CD8-positive, alpha-beta T cell (primary cell): ENCODE measurements at regions of chr9 and their contacts with region 1.

Region 1: DNA sequence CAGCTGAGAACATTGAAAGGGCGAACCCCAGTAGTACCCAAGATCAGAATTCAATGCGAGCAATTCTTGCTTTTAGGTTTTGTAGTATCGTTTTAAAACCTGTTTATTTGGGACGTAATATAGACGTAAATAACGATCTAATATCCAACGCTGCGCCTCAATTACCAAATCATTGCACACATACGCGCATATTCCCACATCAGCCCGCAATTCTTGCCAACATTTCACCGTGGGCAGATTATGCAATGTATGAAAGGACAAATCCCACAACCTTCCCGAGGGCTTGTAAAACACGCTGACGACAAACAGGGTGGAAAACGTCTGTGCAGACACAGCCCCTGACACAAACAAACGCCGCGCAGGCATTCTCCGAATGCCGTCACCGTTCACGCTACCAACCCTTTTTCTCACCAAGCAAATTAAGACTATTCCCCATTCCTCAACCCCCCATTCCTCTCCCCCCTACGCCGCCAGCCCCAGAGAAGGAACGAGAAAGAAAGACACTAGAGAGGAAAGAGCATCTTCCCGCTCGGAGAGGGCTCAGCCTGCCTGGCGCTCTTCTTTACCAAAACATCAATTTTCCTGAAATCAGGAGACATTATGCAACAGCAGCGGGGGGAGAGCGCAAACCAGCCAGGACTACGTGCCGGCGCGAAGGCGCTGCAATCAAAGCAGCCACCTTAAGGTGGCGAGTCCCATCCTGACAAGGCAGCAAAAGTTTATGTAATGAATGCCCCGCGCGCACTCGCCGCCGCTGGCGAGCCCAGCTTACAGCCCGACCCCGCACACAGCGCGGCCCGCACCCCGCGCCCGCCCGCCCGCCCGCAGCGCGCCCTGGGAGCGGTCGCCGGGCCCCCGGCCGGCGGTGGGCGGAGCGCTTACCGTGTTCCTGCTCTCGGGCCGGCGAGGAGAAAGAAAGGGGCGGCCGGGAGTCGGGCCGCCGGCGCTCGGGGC is 597 bp downstream of the NFIL3 start:
- DNase-seq: peak; percentile 21 to 84 (median 57)
- ATAC-seq: peak; percentile 51
- H3K4me3 ChIP-seq: peak overlapping the region; percentile 28 to 68
- H3K4me3 Mint-ChIP-seq: peak overlapping the region; percentile 94
- H3K27ac ChIP-seq: no peak overlapping the region
- H3K27ac Mint-ChIP-seq: peak overlapping the region; percentile 82
- H3K4me1 ChIP-seq: peaks cover 38% of the 10 kb centered on the region
- H3K4me1 Mint-ChIP-seq: peaks cover 44% of the 10 kb centered on the region
- H3K27me3 ChIP-seq: peaks cover 0 to 15% of the 10 kb centered on the region in 2 experiments
- H3K27me3 Mint-ChIP-seq: peaks cover 27% of the 10 kb centered on the region
- CTCF ChIP-seq: no peak

Region 2: DNA sequence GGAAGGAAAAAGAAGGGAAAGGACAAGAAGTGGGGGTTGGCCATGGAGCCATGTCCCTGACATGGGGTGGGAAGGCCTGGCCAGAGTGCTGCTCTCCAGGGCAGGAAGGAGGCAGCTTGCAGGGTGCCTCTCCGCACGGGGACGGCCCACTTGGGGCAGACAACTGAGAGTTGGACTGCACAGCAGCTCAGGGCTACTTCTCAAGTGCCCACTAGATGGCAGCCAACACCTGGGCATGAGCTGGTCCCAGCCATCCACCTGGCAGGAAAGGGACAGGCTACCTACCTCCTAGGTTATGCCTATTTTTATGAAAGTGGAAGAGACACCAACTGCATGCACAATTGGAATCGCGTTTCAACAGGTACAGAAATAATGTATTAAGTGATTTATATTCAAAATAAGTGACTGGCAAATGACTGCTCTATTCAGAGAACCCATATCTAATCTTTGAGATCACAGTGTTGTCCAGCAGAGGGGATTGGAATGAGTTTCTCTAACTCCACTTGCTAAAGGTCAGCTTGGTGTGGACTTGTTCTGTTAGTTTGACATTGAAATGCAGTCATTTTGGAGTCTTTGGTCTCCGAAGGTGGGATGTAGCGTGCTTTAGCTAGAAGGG is 508.1 kb before region 1 on chr9:
- CTCF ChIA-PET with region 1: interaction called, 85 read pairs
- POLR2A ChIA-PET with region 1: interaction called, 7 read pairs
- intact Hi-C with region 1: loop called in 1 of 2 experiments (anchors 1 kb)
- DNase-seq: peak; percentile 45 to 85 (median 74)
- ATAC-seq: peak; percentile 90
- H3K4me3 ChIP-seq: no peak overlapping the region
- H3K4me3 Mint-ChIP-seq: no peak overlapping the region
- H3K27ac ChIP-seq: no peak overlapping the region
- H3K27ac Mint-ChIP-seq: no peak overlapping the region
- H3K4me1 ChIP-seq: no peaks in the 10 kb centered on the region
- H3K4me1 Mint-ChIP-seq: no peaks in the 10 kb centered on the region
- H3K27me3 ChIP-seq: no peaks in the 10 kb centered on the region
- H3K27me3 Mint-ChIP-seq: no peaks in the 10 kb centered on the region
- CTCF ChIP-seq: peak; percentile 86

Region 3: GRCh38 chr9:91036826-91037510 is 386.1 kb before region 1 on chr9:
- CTCF ChIA-PET with region 1: interaction called, 31 read pairs
- POLR2A ChIA-PET with region 1: interaction called, 4 read pairs
- intact Hi-C with region 1: loop called (anchors 1 to 2 kb)
- DNase-seq: peak; percentile 24 to 79 (median 59)
- ATAC-seq: peak; percentile 85
- H3K4me3 ChIP-seq: no peak overlapping the region
- H3K4me3 Mint-ChIP-seq: peak overlapping the region; percentile 35
- H3K27ac ChIP-seq: no peak overlapping the region
- H3K27ac Mint-ChIP-seq: no peak overlapping the region
- H3K4me1 ChIP-seq: peaks cover 11% of the 10 kb centered on the region
- H3K4me1 Mint-ChIP-seq: peaks cover 11% of the 10 kb centered on the region
- H3K27me3 ChIP-seq: no peaks in the 10 kb centered on the region
- H3K27me3 Mint-ChIP-seq: peaks cover 24% of the 10 kb centered on the region
- CTCF ChIP-seq: peak; percentile 43

Region 4: GRCh38 chr9:91101611-91102168 is 321.3 kb before region 1 on chr9:
- CTCF ChIA-PET with region 1: interaction called, 5 read pairs
- POLR2A ChIA-PET with region 1: no interaction called
- intact Hi-C with region 1: loop called (anchors 5 to 10 kb)
- DNase-seq: peak; percentile 62 to 95 (median 78)
- ATAC-seq: peak; percentile 86
- H3K4me3 ChIP-seq: peak overlapping the region in 1 of 2 experiments; percentile 1
- H3K4me3 Mint-ChIP-seq: peak overlapping the region; percentile 53
- H3K27ac ChIP-seq: no peak overlapping the region
- H3K27ac Mint-ChIP-seq: peak overlapping the region; percentile 74
- H3K4me1 ChIP-seq: peaks cover 35% of the 10 kb centered on the region
- H3K4me1 Mint-ChIP-seq: peaks cover 37% of the 10 kb centered on the region
- H3K27me3 ChIP-seq: no peaks in the 10 kb centered on the region
- H3K27me3 Mint-ChIP-seq: no peaks in the 10 kb centered on the region
- CTCF ChIP-seq: no peak

Region 5: GRCh38 chr9:91164724-91165520 is 258.1 kb before region 1 on chr9:
- CTCF ChIA-PET with region 1: no interaction called
- POLR2A ChIA-PET with region 1: no interaction called
- intact Hi-C with region 1: loop called in 1 of 2 experiments (anchors 10 kb)
- DNase-seq: peak; percentile 25 to 85 (median 69)
- ATAC-seq: peak; percentile 91
- H3K4me3 ChIP-seq: no peak overlapping the region
- H3K4me3 Mint-ChIP-seq: peak overlapping the region; percentile 65
- H3K27ac ChIP-seq: peak overlapping the region in 1 of 2 experiments; percentile 72
- H3K27ac Mint-ChIP-seq: peak overlapping the region; percentile 80
- H3K4me1 ChIP-seq: peaks cover 41% of the 10 kb centered on the region
- H3K4me1 Mint-ChIP-seq: peaks cover 41% of the 10 kb centered on the region
- H3K27me3 ChIP-seq: no peaks in the 10 kb centered on the region
- H3K27me3 Mint-ChIP-seq: no peaks in the 10 kb centered on the region
- CTCF ChIP-seq: no peak

Region 6: GRCh38 chr9:91361291-91362050 is 61.6 kb before region 1 on chr9 and contains the start of gene AUH:
- CTCF ChIA-PET with region 1: interaction called, 3 read pairs
- POLR2A ChIA-PET with region 1: interaction called, 19 read pairs
- intact Hi-C with region 1: loop called (anchors 1 to 2 kb)
- DNase-seq: peak; percentile 72 to 94 (median 83)
- ATAC-seq: peak; percentile 95
- H3K4me3 ChIP-seq: peak within 1 kb of the TSS; percentile 67 to 78
- H3K4me3 Mint-ChIP-seq: peak within 1 kb of the TSS; percentile 97
- H3K27ac ChIP-seq: peak within 1 kb of the TSS; percentile 64 to 77
- H3K27ac Mint-ChIP-seq: peak within 1 kb of the TSS; percentile 95
- H3K4me1 ChIP-seq: peaks cover 26% of the 10 kb centered on the region
- H3K4me1 Mint-ChIP-seq: peaks cover 54% of the 10 kb centered on the region
- H3K27me3 ChIP-seq: no peaks in the 10 kb centered on the region
- H3K27me3 Mint-ChIP-seq: no peaks in the 10 kb centered on the region
- CTCF ChIP-seq: peak; percentile 25
- total RNA-seq, gene AUH: 13.4 to 15.2 TPM

Region 7: DNA sequence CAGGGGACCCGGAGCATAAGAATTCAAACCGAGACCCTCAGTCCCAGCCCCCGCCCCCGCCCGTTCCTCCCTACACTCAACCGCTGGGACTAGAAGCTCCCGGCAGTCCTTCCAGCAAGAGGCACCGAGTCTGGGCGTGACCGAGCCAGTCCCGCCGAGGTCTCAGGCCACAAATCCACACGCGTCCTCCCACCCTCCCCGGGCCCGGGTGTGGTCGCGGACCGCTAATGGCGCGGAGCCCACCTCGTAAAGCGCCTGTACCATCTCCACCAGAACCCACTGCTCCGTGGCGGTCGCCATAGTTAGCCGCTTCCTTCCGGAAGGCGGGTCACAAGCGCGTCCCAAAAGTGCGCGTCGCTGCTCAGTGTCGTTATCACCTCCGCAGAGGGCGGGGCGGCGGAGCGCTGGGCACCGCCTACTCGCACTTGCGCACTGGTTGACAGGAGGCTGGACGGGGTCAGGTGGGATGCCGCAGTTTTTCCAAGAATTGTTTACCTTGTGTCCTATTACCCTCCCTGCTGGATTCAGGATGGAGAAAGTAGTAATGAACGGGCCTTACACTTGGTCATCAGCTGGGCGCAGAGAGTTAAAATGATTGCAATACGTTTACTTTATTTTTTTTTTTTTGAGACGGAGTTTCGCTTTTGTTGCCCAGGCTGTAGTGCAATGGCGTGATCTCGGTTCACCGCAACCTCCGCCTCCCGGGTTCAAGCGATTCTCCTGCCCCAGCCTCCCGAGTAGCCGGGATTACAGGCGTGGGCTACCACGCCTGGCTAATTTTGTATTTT is 692.2 kb after region 1 on chr9 and contains the start of gene SPTLC1:
- CTCF ChIA-PET with region 1: no interaction called
- POLR2A ChIA-PET with region 1: no interaction called
- intact Hi-C with region 1: loop called (anchors 5 to 10 kb)
- DNase-seq: peak; percentile 90 to 97 (median 94)
- ATAC-seq: peak; percentile 98
- H3K4me3 ChIP-seq: peak within 1 kb of the TSS; percentile 64 to 88
- H3K4me3 Mint-ChIP-seq: peak within 1 kb of the TSS; percentile 100
- H3K27ac ChIP-seq: peak within 1 kb of the TSS; percentile 89 to 91
- H3K27ac Mint-ChIP-seq: peak within 1 kb of the TSS; percentile 99
- H3K4me1 ChIP-seq: peaks cover 14% of the 10 kb centered on the region
- H3K4me1 Mint-ChIP-seq: peaks cover 41% of the 10 kb centered on the region
- H3K27me3 ChIP-seq: no peaks in the 10 kb centered on the region
- H3K27me3 Mint-ChIP-seq: no peaks in the 10 kb centered on the region
- CTCF ChIP-seq: no peak
- total RNA-seq, gene SPTLC1: 41.4 to 41.9 TPM